Tibial artery (tissue), 4 donors: ENCODE measurements at regions of chr5 and their contacts with region 1.

Region 1: DNA sequence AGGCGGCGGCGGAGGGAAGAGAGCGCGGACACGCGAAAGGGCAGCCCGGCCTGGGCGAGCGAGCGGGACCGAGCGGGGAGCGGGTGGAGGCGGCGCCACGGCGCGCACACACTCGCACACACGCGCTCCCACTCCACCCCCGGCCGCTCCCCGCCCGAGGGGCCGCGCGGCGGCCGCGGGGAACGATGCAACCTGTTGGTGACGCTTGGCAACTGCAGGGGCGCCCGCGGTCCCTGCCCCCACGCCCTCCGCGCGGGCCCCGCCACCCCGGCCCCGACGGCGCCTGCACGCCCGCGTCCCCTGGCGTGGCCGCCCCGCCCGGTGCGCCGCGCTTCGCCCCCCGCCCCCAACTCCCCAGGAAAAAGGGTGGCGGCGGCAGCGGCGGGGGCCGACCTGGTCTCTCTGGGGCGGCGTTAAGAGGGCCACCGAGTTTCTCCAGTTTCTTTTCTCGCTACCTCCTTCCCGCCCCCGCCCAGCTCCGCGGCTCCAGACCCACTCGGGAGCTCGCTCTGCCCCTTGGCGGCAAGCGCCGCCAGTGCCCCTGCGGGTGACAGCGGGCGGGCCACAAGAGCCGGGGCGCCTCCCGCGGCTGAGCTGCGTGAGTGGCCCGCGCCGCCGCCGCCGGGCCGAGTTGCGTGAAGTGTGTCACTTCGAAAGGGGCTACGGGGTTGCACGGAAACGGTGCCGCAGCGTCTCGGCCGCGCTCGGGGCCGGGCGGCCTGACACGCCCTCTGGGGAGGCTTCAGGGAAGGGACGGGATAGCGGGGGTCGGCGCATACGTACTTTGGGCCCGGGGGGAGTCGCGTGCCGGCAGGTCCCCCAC is at the start of gene NR3C1:
- DNase-seq: peak; percentile 84 to 93
- H3K4me3 ChIP-seq: peak within 1 kb of the TSS; percentile 78 to 94
- H3K27ac ChIP-seq: peak within 1 kb of the TSS; percentile 98
- H3K4me1 ChIP-seq: peaks cover 0 to 32% (median 7%) of the 10 kb centered on the region in 4 donors
- H3K27me3 ChIP-seq: no peaks in the 10 kb centered on the region
- CTCF ChIP-seq: peak; percentile 49 to 51

Region 2: GRCh38 chr5:142922223-142922952 is 481.4 kb before region 1 on chr5:
- intact Hi-C with region 1: loop called (anchors 5 kb)
- DNase-seq: no peak
- H3K4me3 ChIP-seq: no peak overlapping the region
- H3K27ac ChIP-seq: no peak overlapping the region
- H3K4me1 ChIP-seq: peaks cover 0 to 12% (median 5%) of the 10 kb centered on the region in 4 donors
- H3K27me3 ChIP-seq: no peaks in the 10 kb centered on the region
- CTCF ChIP-seq: peak; percentile 42 to 66

Region 3: GRCh38 chr5:143002459-143003328 is 401.1 kb before region 1 on chr5:
- intact Hi-C with region 1: loop called (anchors 10 kb)
- DNase-seq: peak in 1 of 2 donors; percentile 35
- H3K4me3 ChIP-seq: no peak overlapping the region
- H3K27ac ChIP-seq: peak overlapping the region; percentile 0 to 46
- H3K4me1 ChIP-seq: peaks cover 5 to 38% (median 25%) of the 10 kb centered on the region in 4 donors
- H3K27me3 ChIP-seq: no peaks in the 10 kb centered on the region
- CTCF ChIP-seq: peak; percentile 30 to 33

Region 4: GRCh38 chr5:143262393-143263174 is 141.2 kb before region 1 on chr5:
- intact Hi-C with region 1: no loop called
- DNase-seq: no peak
- H3K4me3 ChIP-seq: no peak overlapping the region
- H3K27ac ChIP-seq: no peak overlapping the region
- H3K4me1 ChIP-seq: no peaks in the 10 kb centered on the region
- H3K27me3 ChIP-seq: no peaks in the 10 kb centered on the region
- CTCF ChIP-seq: no peak

Region 5: DNA sequence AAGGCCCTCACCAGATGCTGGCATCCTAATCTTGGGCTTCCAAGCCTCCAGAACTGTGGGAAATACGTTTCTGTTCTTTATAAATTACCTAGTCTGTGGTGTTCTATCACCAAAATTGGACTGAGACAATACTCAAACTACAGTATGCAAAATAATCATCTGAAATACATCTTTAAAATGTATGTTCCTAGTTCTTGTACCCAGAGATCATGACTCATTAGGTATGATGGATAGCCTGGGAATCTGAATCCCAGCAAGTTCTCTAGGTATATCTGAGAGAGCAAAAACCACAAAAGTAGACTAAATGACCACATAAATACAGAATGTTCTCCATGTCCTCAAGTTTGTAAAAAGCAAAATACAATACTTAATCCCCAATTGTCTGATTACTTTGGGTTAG is 600.3 kb after region 1 on chr5:
- intact Hi-C with region 1: no loop called
- DNase-seq: no peak
- H3K4me3 ChIP-seq: no peak overlapping the region
- H3K27ac ChIP-seq: no peak overlapping the region
- H3K4me1 ChIP-seq: no peaks in the 10 kb centered on the region
- H3K27me3 ChIP-seq: no peaks in the 10 kb centered on the region
- CTCF ChIP-seq: no peak